ENCODE measurements at regions of chrX and their contacts with region 1.

Region 1: GRCh38 chrX:69158166-69158980 is 6.9 kb downstream of the PJA1 start:
- DNase-seq: peak; percentile 82
- H3K4me3 ChIP-seq: no peak overlapping the region
- H3K27ac ChIP-seq: peak overlapping the region in 1 of 4 donors; percentile 42
- H3K4me1 ChIP-seq: peaks cover 5 to 22% (median 18%) of the 10 kb centered on the region in 4 donors
- H3K27me3 ChIP-seq: no peaks in the 10 kb centered on the region
- CTCF ChIP-seq: peak; percentile 50 to 60 (median 50)
- EP300 ChIP-seq: no peak
- POLR2A ChIP-seq: no peak

Region 2: DNA sequence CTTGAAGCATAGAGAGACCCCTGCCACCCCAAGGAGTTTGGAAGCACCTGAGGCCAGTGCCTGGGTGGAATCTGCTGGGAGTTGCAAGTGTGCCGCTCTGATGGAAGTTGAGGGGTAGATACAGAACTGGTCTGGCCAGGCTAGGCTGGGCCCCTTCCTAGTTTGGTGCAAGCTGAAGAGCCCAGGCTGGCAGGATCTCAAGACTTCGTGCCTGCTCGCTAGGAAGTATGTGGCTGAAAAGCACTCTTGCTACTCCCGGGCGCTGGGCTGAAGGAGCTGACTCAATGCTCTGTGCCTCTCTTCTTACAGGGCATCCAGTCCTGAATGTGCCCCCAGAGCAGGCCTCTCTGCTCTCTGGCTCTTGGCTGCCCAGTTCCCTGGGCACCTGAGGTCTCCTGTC is 58.5 kb after region 1 on chrX:
- intact Hi-C with region 1: loop called (anchors 5 kb)
- DNase-seq: no peak
- H3K4me3 ChIP-seq: no peak overlapping the region
- H3K27ac ChIP-seq: peak overlapping the region; percentile 46 to 57 (median 50)
- H3K4me1 ChIP-seq: peaks cover 0 to 35% (median 18%) of the 10 kb centered on the region in 4 donors
- H3K27me3 ChIP-seq: peaks cover 0 to 5% (median 0%) of the 10 kb centered on the region in 4 donors
- CTCF ChIP-seq: no peak
- EP300 ChIP-seq: no peak
- POLR2A ChIP-seq: no peak

Measured in esophagus muscularis mucosa (tissue), 4 donors.